Activated CD4-positive, alpha-beta T cell treated with anti-CD3 and anti-CD28 coated beads, Interleukin-2, amount 10 ng/mL, durations not matched to agents 7 days and 5 days (primary cell): ENCODE measurements at regions of chr9 and their contacts with region 1.

Region 1: DNA sequence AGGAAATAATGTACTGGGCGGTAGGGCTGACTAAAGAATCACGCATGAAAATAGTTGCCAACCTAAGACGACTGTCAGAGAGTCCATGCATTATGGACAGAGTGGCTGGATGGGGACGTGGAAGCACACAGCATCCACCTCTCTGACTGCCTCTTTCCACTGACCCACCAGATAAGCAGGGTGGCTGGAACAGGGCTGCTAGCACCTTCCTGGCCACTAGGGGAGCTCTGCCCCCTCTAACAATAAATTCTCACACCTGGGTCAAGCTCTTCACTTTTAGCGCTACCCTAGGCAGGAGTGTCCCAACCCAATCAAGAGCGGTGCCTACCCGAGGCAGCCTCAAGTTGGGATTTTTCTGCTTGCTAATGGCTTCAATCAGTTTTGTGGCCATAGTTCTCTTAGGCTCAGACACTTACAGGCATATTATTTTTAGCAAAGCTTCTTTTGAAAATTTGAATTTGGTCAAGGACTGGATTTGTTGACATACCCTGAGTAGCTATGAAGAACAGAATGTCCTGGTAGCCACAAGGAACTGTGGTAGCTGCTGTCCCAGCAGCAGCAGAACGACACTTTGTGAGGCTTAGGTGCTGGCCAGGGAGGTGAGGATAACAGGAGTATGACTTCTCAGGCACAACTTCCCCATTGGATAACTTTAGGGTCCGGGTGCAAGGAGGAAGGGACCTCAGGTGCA is 6.9 kb upstream of the TPM2 start:
- DNase-seq: peak; percentile 55
- H3K4me3 Mint-ChIP-seq: no peak overlapping the region
- H3K27ac Mint-ChIP-seq: no peak overlapping the region
- H3K4me1 Mint-ChIP-seq: peaks cover 9% of the 10 kb centered on the region
- H3K27me3 Mint-ChIP-seq: no peaks in the 10 kb centered on the region

Region 2: DNA sequence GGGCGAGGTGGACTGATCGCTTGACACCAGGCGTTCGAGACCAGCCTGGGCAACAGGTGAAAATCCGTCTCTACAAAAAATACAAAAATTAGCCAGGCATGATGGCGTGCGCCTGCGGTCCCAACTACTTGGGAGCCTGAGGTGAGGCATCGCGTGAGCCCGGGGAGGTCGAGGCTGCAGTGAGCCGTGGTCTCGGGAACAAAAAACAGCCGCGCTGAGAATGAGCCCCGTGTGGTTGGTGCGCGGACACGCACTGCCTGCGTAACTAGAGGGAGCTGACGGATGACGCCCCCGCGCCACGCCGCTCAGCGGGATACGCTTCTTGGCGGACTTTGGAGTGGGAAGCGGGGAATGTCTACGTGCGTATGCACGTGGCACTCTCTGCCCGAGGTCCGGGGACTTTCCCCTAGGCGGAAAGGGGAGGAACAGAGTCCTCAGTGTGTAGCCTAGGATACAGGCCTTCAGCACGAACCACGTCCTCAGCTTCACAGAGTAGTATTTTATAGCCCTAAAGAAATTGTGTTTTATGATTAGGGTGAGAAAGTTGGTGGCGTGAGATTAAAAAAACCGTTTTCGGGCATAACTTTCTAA is 39.0 kb before region 1 on chr9 and contains the start of gene RMRP:
- CTCF ChIA-PET with region 1: interaction called, 12 read pairs
- POLR2A ChIA-PET with region 1: no interaction called
- DNase-seq: peak; percentile 91
- H3K4me3 Mint-ChIP-seq: peak within 1 kb of the TSS; percentile 93
- H3K27ac Mint-ChIP-seq: peak within 1 kb of the TSS; percentile 99
- H3K4me1 Mint-ChIP-seq: peaks cover 64% of the 10 kb centered on the region
- H3K27me3 Mint-ChIP-seq: peaks cover 4% of the 10 kb centered on the region
- total RNA-seq, gene RMRP: 1,959 to 11,185 TPM

Region 3: GRCh38 chr9:35664531-35665470 is 31.9 kb before region 1 on chr9 and contains the start of gene ARHGEF39:
- CTCF ChIA-PET with region 1: interaction called, 16 read pairs
- POLR2A ChIA-PET with region 1: no interaction called
- DNase-seq: peak; percentile 76
- H3K4me3 Mint-ChIP-seq: peak within 1 kb of the TSS; percentile 85
- H3K27ac Mint-ChIP-seq: peak within 1 kb of the TSS; percentile 88
- H3K4me1 Mint-ChIP-seq: peaks cover 64% of the 10 kb centered on the region
- H3K27me3 Mint-ChIP-seq: no peaks in the 10 kb centered on the region
- total RNA-seq, gene ARHGEF39: 11.8 to 13.5 TPM

Region 4: GRCh38 chr9:35716230-35716629 is 19.6 kb after region 1 on chr9:
- CTCF ChIA-PET with region 1: interaction called, 67 read pairs
- POLR2A ChIA-PET with region 1: no interaction called
- DNase-seq: no peak
- H3K4me3 Mint-ChIP-seq: no peak overlapping the region
- H3K27ac Mint-ChIP-seq: no peak overlapping the region
- H3K4me1 Mint-ChIP-seq: no peaks in the 10 kb centered on the region
- H3K27me3 Mint-ChIP-seq: no peaks in the 10 kb centered on the region